ENCODE measurements at regions of chr5 and their contacts with region 1.

Region 1: DNA sequence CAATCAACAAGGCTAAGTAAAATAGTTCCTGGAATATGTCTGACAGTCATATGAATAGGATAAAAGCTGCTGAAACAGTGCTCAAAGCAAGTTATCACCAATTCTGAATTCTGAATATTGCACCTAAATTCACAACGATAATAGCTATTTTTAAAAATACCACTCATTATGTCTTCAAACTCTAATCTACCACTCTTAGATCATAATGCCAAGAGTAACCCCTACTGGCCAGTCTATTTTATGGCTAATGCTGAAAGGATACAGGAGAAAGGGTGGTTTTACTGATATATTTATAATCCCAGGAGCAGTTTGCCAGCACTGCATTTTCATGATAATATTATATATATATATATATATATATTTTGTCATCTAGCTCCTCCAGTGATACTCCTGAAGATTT is 232.8 kb downstream of the PDE4D start:
- DNase-seq: no peak
- H3K4me3 ChIP-seq: no peak overlapping the region
- CTCF ChIP-seq: no peak
- POLR2A ChIP-seq: no peak

Region 2: DNA sequence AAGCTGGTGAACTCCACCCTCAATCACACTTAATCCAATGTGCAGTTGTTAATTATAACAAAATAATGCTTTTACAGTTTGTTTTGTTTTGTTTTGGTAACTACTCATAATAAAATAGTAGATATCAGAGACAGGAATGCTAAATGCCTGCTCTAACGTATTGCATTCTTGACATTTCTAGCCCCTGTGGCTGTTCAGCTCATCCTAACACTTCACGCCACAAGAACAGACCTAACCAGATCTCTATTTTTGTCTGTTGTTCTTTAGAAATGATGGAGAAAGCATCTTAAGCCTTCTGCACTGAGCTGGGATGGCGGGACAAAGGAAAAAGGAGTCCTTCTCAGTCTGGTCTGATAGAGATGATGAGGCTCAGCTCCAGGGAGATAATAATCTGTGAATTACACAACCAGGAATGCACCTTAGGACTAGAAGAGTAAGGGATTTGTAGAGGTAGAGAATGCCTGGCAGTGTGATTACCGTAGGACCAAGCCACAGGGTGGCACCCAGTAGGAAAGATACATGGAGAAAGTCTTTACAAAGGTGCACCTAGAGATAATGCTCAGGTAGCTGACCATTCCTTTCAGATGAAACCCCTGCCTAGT is 396.0 kb before region 1 on chr5:
- intact Hi-C with region 1: no loop called
- DNase-seq: no peak
- H3K4me3 ChIP-seq: no peak overlapping the region
- CTCF ChIP-seq: no peak
- POLR2A ChIP-seq: no peak

Region 3: DNA sequence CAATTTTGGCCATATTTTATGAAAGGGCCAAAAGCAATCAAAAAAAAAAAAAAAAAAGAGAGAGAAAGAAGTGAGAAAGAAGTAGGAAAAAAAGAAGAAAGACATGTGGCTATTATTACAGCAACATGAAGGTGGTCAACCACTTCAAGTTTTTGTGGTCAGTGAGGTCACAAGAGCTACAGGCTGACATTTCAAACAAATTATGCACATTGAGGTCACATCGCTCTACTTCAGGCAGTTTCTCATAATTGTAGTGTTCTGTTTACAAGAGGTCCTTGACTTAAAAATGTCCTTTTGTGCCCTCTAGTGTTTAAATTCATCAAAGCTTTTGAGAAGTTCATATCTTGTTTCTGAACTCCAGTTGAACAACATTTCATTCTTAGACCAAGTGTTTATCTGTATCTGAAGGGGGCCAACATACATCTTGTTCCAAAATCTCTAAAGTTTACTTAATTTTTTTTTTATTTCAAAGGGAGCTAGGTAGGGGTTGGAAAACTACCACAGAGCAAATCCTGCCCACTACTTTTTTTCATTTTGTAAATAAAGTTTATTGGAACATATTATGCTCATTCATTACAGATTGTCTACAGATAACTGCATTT is 280.3 kb before region 1 on chr5:
- intact Hi-C with region 1: loop called (anchors 10 kb)
- DNase-seq: no peak
- H3K4me3 ChIP-seq: no peak overlapping the region
- CTCF ChIP-seq: no peak
- POLR2A ChIP-seq: no peak

Region 4: GRCh38 chr5:59874675-59875074 is 213.9 kb after region 1 on chr5:
- intact Hi-C with region 1: no loop called
- DNase-seq: no peak
- H3K4me3 ChIP-seq: no peak overlapping the region
- CTCF ChIP-seq: no peak
- POLR2A ChIP-seq: no peak